ENCODE measurements at regions of chr17 and their contacts with region 1.

Region 1: GRCh38 chr17:38702166-38702899 is 2.7 kb upstream of the MLLT6 start:
- DNase-seq: peak; percentile 92
- ATAC-seq: peak; percentile 10
- H3K4me3 Mint-ChIP-seq: peak overlapping the region; percentile 95
- H3K27ac Mint-ChIP-seq: peak overlapping the region; percentile 100
- H3K4me1 Mint-ChIP-seq: peaks cover 48% of the 10 kb centered on the region
- H3K27me3 Mint-ChIP-seq: no peaks in the 10 kb centered on the region

Region 2: DNA sequence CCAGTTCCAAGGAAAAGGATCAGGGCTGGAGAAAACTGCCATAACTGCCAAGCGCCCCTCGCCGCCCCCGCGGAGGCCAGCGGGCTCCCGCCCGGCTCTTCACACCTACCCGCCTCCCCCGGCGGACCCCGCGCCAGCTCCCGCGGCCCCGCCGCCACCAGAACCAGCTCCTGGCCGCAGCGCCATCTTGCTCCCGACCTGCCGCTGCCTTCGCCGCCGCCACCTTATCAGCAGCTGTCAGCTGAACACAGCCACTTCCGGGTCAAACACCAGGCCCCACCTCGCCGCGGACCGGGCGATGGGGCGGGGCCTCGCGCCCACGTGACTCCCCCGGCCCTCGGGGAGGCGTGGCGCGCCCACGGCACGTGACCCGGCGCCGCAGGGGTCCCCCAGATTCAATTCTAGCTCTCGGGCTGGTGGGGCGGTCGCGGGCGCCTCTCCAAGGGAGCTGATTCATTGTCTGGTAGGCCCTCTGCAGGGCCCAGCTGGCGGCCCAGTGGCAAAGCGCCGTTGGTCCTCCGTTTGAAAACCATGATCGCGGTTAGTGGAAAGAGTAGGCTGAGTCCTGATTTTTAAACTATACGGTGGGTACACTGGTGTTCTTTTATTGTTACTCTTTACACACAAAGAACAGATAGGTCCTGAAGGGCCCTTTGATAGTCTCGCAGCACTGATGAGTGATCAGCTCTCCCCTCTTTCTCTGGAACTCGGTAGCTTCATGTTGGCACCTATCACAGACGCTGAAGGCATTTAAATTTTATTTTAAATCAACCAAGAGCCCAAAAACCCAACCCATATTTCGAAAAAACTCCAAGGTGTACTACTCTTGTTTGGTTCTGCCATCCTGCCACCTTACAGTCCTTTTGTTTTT is 1092.9 kb before region 1 on chr17 and contains the start of gene SYNRG:
- CTCF ChIA-PET with region 1: no interaction called
- POLR2A ChIA-PET with region 1: no interaction called
- intact Hi-C with region 1: loop called (anchors 5 kb)
- DNase-seq: peak; percentile 96
- ATAC-seq: peak; percentile 82
- H3K4me3 Mint-ChIP-seq: peak within 1 kb of the TSS; percentile 85
- H3K27ac Mint-ChIP-seq: peak within 1 kb of the TSS; percentile 98
- H3K4me1 Mint-ChIP-seq: peaks cover 37% of the 10 kb centered on the region
- H3K27me3 Mint-ChIP-seq: no peaks in the 10 kb centered on the region
- total RNA-seq, gene SYNRG: 39.0 to 46.7 TPM

Region 3: GRCh38 chr17:38533866-38534497 is 168.4 kb before region 1 on chr17:
- CTCF ChIA-PET with region 1: no interaction called
- POLR2A ChIA-PET with region 1: no interaction called
- intact Hi-C with region 1: no loop called
- DNase-seq: no peak
- ATAC-seq: no peak
- H3K4me3 Mint-ChIP-seq: no peak overlapping the region
- H3K27ac Mint-ChIP-seq: no peak overlapping the region
- H3K4me1 Mint-ChIP-seq: no peaks in the 10 kb centered on the region
- H3K27me3 Mint-ChIP-seq: peaks cover 16% of the 10 kb centered on the region

Region 4: DNA sequence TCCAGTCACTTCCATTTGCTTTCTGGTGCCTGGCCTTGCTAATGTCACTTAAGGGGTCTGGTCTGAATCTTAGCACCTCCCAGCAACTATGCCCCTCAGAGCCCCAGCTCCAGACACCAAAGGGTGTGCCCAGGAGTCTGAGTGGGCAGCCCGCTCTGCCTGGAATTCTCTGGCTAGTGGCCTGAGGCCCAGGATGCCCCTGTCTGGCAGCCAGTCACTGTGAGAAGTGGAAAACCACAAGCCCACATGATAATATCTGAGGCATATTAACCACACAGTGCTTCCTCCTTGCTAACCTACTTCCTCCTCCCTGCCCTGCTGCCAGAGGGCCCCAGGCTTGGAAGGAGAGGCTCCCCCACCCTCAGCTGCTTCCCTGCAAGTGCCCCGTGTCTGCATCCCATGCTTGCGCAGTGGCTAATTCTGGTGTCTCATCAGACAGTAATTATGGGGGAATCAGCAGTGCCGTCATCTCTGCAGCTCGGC is 110.5 kb before region 1 on chr17:
- CTCF ChIA-PET with region 1: no interaction called
- POLR2A ChIA-PET with region 1: no interaction called
- intact Hi-C with region 1: no loop called
- DNase-seq: no peak
- ATAC-seq: peak; percentile 43
- H3K4me3 Mint-ChIP-seq: no peak overlapping the region
- H3K27ac Mint-ChIP-seq: no peak overlapping the region
- H3K4me1 Mint-ChIP-seq: peaks cover 20% of the 10 kb centered on the region
- H3K27me3 Mint-ChIP-seq: peaks cover 64% of the 10 kb centered on the region

Region 5: GRCh38 chr17:38674749-38675615 is 27.4 kb before region 1 on chr17 and contains the start of gene EPOP:
- CTCF ChIA-PET with region 1: interaction called, 11 read pairs
- POLR2A ChIA-PET with region 1: interaction called, 20 read pairs
- intact Hi-C with region 1: loop called (anchors 1 kb)
- DNase-seq: peak; percentile 96
- ATAC-seq: peak; percentile 78
- H3K4me3 Mint-ChIP-seq: peak within 1 kb of the TSS; percentile 76
- H3K27ac Mint-ChIP-seq: peak within 1 kb of the TSS; percentile 85
- H3K4me1 Mint-ChIP-seq: peaks cover 47% of the 10 kb centered on the region
- H3K27me3 Mint-ChIP-seq: peaks cover 9% of the 10 kb centered on the region
- total RNA-seq, gene EPOP: 31.8 to 37.3 TPM

Region 6: GRCh38 chr17:38752119-38752929 is 50.0 kb after region 1 on chr17 and contains the start of gene PSMB3:
- CTCF ChIA-PET with region 1: interaction called, 6 read pairs
- POLR2A ChIA-PET with region 1: interaction called, 5 read pairs
- intact Hi-C with region 1: loop called (anchors 1 kb)
- DNase-seq: peak; percentile 99
- ATAC-seq: peak; percentile 95
- H3K4me3 Mint-ChIP-seq: peak within 1 kb of the TSS; percentile 93
- H3K27ac Mint-ChIP-seq: peak within 1 kb of the TSS; percentile 99
- H3K4me1 Mint-ChIP-seq: peaks cover 43% of the 10 kb centered on the region
- H3K27me3 Mint-ChIP-seq: peaks cover 23% of the 10 kb centered on the region
- total RNA-seq, gene PSMB3: 337 to 396 TPM

Region 7: GRCh38 chr17:38853292-38854219 is 151.2 kb after region 1 on chr17 and contains the start of gene RPL23:
- CTCF ChIA-PET with region 1: no interaction called
- POLR2A ChIA-PET with region 1: interaction called, 3 read pairs
- intact Hi-C with region 1: loop called in 1 of 2 experiments (anchors 1 kb)
- DNase-seq: peak; percentile 96
- ATAC-seq: peak; percentile 87
- H3K4me3 Mint-ChIP-seq: peak within 1 kb of the TSS; percentile 99
- H3K27ac Mint-ChIP-seq: peak within 1 kb of the TSS; percentile 99
- H3K4me1 Mint-ChIP-seq: peaks cover 46% of the 10 kb centered on the region
- H3K27me3 Mint-ChIP-seq: no peaks in the 10 kb centered on the region
- total RNA-seq, gene RPL23: 1,886 to 1,896 TPM

Region 8: GRCh38 chr17:39199820-39200069 is 497.4 kb after region 1 on chr17:
- CTCF ChIA-PET with region 1: no interaction called
- POLR2A ChIA-PET with region 1: no interaction called
- intact Hi-C with region 1: loop called in 1 of 2 experiments (anchors 1 kb)
- DNase-seq: peak; percentile 95
- ATAC-seq: peak; percentile 69
- H3K4me3 Mint-ChIP-seq: peak overlapping the region; percentile 98
- H3K27ac Mint-ChIP-seq: peak overlapping the region; percentile 100
- H3K4me1 Mint-ChIP-seq: peaks cover 51% of the 10 kb centered on the region
- H3K27me3 Mint-ChIP-seq: no peaks in the 10 kb centered on the region

Region 9: DNA sequence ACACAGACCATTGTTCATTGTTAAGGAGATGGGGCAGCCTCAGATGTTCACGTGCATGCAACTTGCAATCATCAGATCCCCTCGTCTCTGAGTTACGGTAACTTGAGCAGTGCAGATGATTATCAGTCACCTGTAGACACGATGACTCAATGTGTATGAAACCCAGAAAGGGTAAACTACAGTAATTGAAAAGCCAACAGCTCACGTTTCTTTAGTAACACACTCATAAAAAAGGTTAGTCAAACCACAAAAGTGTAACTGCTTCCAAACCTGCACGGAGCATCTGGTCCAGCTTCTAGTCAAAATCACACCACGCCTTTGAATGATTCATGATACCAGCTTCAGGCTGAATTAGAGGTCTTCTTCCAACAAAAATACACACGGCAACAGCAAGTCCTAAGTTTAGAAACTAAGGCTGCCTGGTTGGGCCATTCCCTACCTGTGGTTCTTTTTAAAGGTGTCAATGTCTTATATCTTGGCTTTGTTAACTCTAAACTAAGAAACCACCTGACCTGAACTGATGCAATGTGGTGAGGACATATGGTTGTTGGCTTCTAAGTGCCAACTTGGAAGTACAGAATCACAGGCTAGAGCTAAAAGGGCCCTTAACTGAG is 1067.7 kb after region 1 on chr17:
- CTCF ChIA-PET with region 1: no interaction called
- POLR2A ChIA-PET with region 1: no interaction called
- intact Hi-C with region 1: loop called in 1 of 2 experiments (anchors 5 kb)
- DNase-seq: peak; percentile 78
- ATAC-seq: peak; percentile 80
- H3K4me3 Mint-ChIP-seq: peak overlapping the region; percentile 7
- H3K27ac Mint-ChIP-seq: peak overlapping the region; percentile 82
- H3K4me1 Mint-ChIP-seq: peaks cover 96% of the 10 kb centered on the region
- H3K27me3 Mint-ChIP-seq: no peaks in the 10 kb centered on the region